ENCODE measurements at regions of chr6 and their contacts with region 1.

Region 1: DNA sequence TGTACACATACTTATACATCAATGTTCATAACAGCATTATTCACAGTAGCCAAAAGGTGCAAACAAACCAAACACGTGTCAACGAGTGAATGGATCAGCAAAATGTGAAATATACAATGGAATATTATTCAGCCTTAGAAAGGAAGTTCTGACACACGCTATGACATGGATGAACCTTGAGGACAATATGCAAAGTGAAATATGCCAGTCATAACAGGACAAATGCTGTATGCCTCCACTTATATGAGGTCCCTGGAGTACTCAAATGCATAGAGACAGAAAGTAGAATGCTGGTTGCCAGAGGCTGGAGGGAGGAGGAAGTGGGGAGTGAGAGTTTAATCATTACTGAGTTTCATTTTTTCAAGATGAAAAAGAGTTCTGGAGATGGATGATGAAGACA is 37.8 kb upstream of the IGF2R start:
- DNase-seq: peak; percentile 69
- H3K4me3 Mint-ChIP-seq: no peak overlapping the region
- H3K27ac Mint-ChIP-seq: peak overlapping the region; percentile 92
- H3K4me1 Mint-ChIP-seq: peaks cover 37% of the 10 kb centered on the region
- H3K27me3 Mint-ChIP-seq: peaks cover 2% of the 10 kb centered on the region

Region 2: GRCh38 chr6:159693128-159693893 is 237.8 kb before region 1 on chr6 and contains the start of gene SOD2:
- CTCF ChIA-PET with region 1: no interaction called
- POLR2A ChIA-PET with region 1: interaction called, 3 read pairs
- intact Hi-C with region 1: loop called (anchors 1 kb)
- DNase-seq: peak; percentile 88
- H3K4me3 Mint-ChIP-seq: peak within 1 kb of the TSS; percentile 94
- H3K27ac Mint-ChIP-seq: peak within 1 kb of the TSS; percentile 93
- H3K4me1 Mint-ChIP-seq: peaks cover 38% of the 10 kb centered on the region
- H3K27me3 Mint-ChIP-seq: no peaks in the 10 kb centered on the region
- total RNA-seq, gene SOD2: 103 to 108 TPM

Region 3: GRCh38 chr6:159789377-159790148 is 141.5 kb before region 1 on chr6 and contains the start of gene TCP1:
- CTCF ChIA-PET with region 1: no interaction called
- POLR2A ChIA-PET with region 1: no interaction called
- intact Hi-C with region 1: loop called (anchors 1 kb)
- DNase-seq: peak; percentile 100
- H3K4me3 Mint-ChIP-seq: peak within 1 kb of the TSS; percentile 96
- H3K27ac Mint-ChIP-seq: peak within 1 kb of the TSS; percentile 98
- H3K4me1 Mint-ChIP-seq: peaks cover 64% of the 10 kb centered on the region
- H3K27me3 Mint-ChIP-seq: no peaks in the 10 kb centered on the region
- total RNA-seq, gene TCP1: 429 to 438 TPM

Region 4: DNA sequence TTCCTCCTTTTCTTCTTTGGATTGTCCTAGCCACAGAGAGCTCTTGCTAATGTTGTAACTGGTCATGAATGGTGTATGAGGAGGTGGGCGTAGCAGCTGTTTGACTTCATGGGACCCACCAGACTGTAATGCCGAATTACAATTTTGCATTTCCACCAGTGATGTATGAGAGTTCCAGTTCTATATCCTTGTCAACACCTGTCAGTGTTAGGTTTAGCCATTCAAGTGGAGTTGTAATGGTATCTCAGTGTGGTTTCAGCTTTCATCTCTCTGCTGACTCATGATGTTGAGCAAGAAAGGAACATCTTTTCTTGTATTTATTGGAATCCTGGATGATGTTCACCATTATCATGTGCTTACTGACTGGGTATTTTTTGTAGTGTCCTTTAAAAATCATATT is 42.8 kb after region 1 on chr6:
- CTCF ChIA-PET with region 1: interaction called, 4 read pairs
- POLR2A ChIA-PET with region 1: interaction called, 8 read pairs
- intact Hi-C with region 1: loop called (anchors 1 kb)
- DNase-seq: peak; percentile 52
- H3K4me3 Mint-ChIP-seq: no peak overlapping the region
- H3K27ac Mint-ChIP-seq: peak overlapping the region; percentile 77
- H3K4me1 Mint-ChIP-seq: peaks cover 84% of the 10 kb centered on the region
- H3K27me3 Mint-ChIP-seq: no peaks in the 10 kb centered on the region

Region 5: GRCh38 chr6:160015778-160016684 is 84.9 kb after region 1 on chr6:
- CTCF ChIA-PET with region 1: no interaction called
- POLR2A ChIA-PET with region 1: no interaction called
- intact Hi-C with region 1: loop called (anchors 1 kb)
- DNase-seq: peak; percentile 76
- H3K4me3 Mint-ChIP-seq: peak overlapping the region; percentile 36
- H3K27ac Mint-ChIP-seq: peak overlapping the region; percentile 80
- H3K4me1 Mint-ChIP-seq: peaks cover 66% of the 10 kb centered on the region
- H3K27me3 Mint-ChIP-seq: no peaks in the 10 kb centered on the region

Region 6: GRCh38 chr6:160041608-160042007 is 110.5 kb after region 1 on chr6:
- CTCF ChIA-PET with region 1: no interaction called
- POLR2A ChIA-PET with region 1: no interaction called
- intact Hi-C with region 1: no loop called
- DNase-seq: no peak
- H3K4me3 Mint-ChIP-seq: no peak overlapping the region
- H3K27ac Mint-ChIP-seq: no peak overlapping the region
- H3K4me1 Mint-ChIP-seq: peaks cover 5% of the 10 kb centered on the region
- H3K27me3 Mint-ChIP-seq: no peaks in the 10 kb centered on the region

Region 7: DNA sequence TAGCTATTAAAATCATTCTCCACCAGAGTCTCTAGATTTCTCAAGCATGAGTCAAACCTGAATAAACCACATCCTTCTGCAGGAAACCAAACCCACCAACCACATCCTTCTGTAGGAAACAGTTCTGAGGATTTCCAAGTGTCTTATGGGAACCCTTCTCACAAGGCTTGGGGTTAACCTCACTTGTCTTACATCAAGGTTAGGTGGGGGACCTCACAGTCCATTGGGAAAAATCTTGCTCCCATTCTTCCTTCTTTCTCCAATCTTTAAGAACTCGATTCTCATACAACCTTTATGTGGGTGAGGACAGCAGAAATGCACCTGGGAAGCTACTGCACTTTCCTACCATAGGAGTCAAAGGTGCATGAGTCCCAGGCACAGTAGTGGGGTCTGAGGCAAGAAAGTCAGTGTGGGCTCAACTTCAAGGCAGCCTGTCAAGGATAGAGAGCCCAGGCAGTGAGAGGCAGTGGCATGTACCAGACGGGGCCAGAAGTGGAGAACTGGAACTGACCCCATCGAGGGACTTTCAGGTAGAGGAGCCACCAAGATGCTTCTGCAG is 531.5 kb after region 1 on chr6:
- CTCF ChIA-PET with region 1: no interaction called
- POLR2A ChIA-PET with region 1: interaction called, 3 read pairs
- intact Hi-C with region 1: loop called (anchors 1 kb)
- DNase-seq: peak; percentile 64
- H3K4me3 Mint-ChIP-seq: peak overlapping the region; percentile 42
- H3K27ac Mint-ChIP-seq: peak overlapping the region; percentile 68
- H3K4me1 Mint-ChIP-seq: peaks cover 72% of the 10 kb centered on the region
- H3K27me3 Mint-ChIP-seq: peaks cover 14% of the 10 kb centered on the region

Measured in activated CD4-positive, alpha-beta memory T cell treated with anti-CD3 and anti-CD28 coated beads for 36 hours (primary cell).